HEK293 (cell line): ENCODE measurements at regions of chr1 and their contacts with region 1.

Region 1: DNA sequence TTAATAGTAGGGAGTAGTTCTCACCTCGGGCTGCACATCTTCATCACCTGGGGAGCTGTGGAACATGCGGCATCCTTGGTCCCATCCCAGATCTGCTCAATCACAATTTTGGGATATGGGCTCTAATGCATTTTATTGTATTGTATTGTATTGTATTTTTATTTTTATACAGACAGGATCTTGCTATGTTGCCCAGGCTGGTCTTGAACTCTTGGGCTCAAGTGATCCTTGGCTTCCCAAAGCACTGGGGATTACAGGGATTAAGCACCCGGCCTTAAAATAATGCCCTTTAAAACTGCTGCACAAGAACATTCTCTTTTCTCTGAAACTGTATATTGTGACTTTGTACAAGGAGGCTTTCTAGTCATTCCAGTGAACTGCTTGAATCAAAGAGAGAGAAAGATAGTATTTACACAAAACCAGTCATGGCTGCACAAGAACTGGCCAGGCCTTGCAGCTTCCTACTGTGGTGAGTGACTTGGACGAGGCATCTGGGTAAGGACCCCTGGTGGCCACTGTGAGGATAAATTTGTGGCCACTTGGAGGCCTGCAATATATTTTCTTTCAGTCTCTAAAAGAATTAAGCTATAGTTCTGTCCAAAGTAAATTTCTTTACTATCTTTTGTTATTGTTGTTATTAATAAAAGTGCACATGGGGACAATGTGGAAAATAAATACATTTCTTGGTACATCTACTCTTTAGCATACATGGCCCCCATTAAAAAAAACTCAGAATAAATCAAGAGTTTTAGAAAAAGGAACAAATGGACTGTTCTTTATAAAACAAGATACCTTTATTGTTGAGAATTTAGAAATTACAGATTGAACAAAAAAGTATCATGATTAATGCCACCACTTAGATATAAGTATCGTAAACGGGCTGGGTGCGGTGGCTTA is 48.0 kb downstream of the TBCE start:
- H3K4me3 ChIP-seq: no peak overlapping the region
- H3K27ac ChIP-seq: no peak overlapping the region
- H3K4me1 ChIP-seq: no peaks in the 10 kb centered on the region; the same call in 1 of the 2 replicates
- CTCF ChIP-seq: peak; percentile 78

Region 2: GRCh38 chr1:235093696-235094592 is 321.3 kb before region 1 on chr1:
- CTCF ChIA-PET with region 1: interaction called, 13 read pairs
- POLR2A ChIA-PET with region 1: no interaction called
- H3K4me3 ChIP-seq: no peak overlapping the region
- H3K27ac ChIP-seq: no peak overlapping the region
- H3K4me1 ChIP-seq: no peaks in the 10 kb centered on the region
- CTCF ChIP-seq: peak; percentile 96

Region 3: DNA sequence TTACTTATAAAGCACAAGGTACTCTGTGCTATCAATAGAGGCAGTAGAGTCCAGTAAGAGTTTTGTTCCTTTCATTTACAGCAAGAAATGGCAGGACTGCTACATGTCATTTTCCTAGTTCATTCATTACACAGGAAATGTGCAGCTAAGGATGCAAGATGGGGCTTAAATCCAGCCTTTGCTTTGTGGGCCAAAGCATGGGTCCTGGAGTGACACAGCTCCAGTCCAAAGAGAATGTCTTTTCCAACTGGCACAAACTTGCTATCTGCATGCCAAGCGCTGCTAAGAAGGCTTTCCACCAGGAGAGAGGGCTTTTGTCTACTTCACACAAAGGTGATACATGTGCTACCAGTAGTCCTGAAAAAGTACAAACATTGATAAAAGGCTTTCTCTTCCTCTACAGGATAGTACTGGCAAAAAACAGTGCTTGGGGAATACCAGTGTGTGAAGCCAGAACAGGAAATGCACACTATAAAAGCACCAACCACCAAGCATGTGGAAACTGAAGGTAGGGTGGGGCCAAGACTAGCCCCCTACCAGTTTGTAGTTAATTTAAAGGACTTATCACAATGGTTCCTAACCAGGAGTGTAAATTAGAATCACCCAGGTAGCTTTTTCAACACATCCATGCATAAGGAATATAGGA is 156.0 kb before region 1 on chr1:
- CTCF ChIA-PET with region 1: interaction called, 41 read pairs
- POLR2A ChIA-PET with region 1: no interaction called
- H3K4me3 ChIP-seq: no peak overlapping the region
- H3K27ac ChIP-seq: no peak overlapping the region
- H3K4me1 ChIP-seq: peaks cover 21% of the 10 kb centered on the region
- CTCF ChIP-seq: no peak

Region 4: GRCh38 chr1:235304549-235305451 is 110.5 kb before region 1 on chr1:
- CTCF ChIA-PET with region 1: interaction called, 12 read pairs
- POLR2A ChIA-PET with region 1: no interaction called
- H3K4me3 ChIP-seq: no peak overlapping the region
- H3K27ac ChIP-seq: peak overlapping the region; percentile 57
- H3K4me1 ChIP-seq: peaks cover 30% of the 10 kb centered on the region
- CTCF ChIP-seq: no peak

Region 5: DNA sequence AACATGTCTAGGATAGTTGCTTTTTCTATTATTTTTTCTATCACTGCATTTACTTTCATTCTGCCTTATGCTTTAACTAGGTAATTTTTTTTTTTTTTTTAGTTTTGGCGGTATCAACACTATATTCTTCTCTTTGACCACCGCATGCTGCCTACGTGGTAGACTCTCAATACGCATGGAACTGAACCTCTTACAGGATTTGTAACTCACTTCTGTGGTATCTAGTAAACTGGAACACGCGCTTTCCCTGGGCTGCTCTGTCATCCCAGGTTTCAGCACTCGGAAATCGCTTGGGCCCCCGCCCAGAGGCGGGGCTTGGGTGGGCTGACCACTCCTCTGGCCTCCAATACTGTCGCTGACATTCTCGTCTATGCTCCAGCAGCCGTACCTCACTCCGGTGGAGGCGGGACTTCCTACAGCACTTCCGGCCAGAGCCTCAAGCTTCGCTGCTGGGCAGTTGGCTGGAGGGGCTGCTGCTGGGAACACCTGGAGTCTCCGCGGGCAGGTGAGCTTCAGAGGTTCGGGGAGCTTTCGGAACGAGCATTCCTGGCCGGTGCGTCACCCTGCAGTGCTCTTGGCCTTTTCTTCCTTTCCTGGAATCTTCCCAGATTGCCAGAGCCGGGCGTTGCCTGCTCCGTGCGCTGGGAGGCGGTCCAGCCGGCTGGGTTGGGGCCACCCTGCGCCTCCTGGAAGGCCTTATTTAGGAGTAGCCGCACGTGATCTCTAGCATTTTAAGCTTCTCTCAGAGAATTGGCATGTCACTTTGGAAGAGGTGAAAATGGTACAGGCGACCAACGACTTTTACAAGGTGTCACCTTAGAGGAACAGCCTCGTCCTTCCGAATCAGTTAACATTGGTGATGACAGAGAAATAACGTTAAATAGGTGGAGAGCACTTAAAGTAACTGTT is 48.0 kb before region 1 on chr1 and contains the start of gene TBCE:
- CTCF ChIA-PET with region 1: interaction called, 16 read pairs
- POLR2A ChIA-PET with region 1: interaction called, 6 read pairs
- H3K4me3 ChIP-seq: peak within 1 kb of the TSS; percentile 90
- H3K27ac ChIP-seq: peak within 1 kb of the TSS; percentile 74
- H3K4me1 ChIP-seq: 0 out of 2 replicates have a peak, but pooled peaks cover 4% of the 10 kb centered on the region
- CTCF ChIP-seq: peak; percentile 56; the same call in 1 of the 2 replicates

Region 6: GRCh38 chr1:235404195-235404594 is 11.1 kb before region 1 on chr1:
- CTCF ChIA-PET with region 1: interaction called, 14 read pairs
- POLR2A ChIA-PET with region 1: no interaction called
- H3K4me3 ChIP-seq: no peak overlapping the region
- H3K27ac ChIP-seq: no peak overlapping the region
- H3K4me1 ChIP-seq: peaks cover 30% of the 10 kb centered on the region
- CTCF ChIP-seq: no peak

Region 7: DNA sequence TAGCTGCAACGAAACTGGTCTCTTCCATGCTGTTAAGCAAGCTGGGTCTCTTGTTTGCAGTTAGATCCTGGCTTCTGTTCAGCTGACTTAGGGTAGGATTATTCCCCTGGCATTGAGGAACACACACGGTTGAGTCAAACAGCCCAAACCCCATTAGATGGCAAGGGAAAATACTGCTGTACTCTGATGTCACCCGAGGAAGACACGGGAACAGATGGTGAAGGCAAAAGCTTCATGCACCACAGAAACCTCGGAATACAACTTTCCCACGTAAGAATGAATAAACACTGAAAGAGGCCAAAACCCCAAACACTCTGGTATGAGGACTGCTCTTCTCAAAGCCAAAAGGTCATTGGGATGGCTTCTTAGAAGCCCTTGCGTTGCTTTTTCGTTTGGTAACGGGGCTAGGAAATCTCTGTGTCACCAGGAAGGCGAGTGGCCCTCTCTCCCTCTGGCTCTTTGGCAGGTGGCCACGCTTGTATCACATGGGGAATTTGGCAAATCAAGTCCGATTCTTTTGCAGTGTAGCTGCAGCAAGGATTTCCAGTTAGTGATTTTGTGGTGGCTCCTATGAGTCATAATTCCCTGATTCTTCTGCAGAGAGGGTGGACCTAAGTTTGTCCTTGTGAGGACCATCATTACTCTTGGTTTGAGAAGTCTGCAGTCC is 468.1 kb after region 1 on chr1:
- CTCF ChIA-PET with region 1: no interaction called
- POLR2A ChIA-PET with region 1: no interaction called
- H3K4me3 ChIP-seq: no peak overlapping the region
- H3K27ac ChIP-seq: no peak overlapping the region
- H3K4me1 ChIP-seq: no peaks in the 10 kb centered on the region
- CTCF ChIP-seq: no peak